HEK293T (cell line): ENCODE measurements at regions of chr7 and their contacts with region 1.

Region 1: DNA sequence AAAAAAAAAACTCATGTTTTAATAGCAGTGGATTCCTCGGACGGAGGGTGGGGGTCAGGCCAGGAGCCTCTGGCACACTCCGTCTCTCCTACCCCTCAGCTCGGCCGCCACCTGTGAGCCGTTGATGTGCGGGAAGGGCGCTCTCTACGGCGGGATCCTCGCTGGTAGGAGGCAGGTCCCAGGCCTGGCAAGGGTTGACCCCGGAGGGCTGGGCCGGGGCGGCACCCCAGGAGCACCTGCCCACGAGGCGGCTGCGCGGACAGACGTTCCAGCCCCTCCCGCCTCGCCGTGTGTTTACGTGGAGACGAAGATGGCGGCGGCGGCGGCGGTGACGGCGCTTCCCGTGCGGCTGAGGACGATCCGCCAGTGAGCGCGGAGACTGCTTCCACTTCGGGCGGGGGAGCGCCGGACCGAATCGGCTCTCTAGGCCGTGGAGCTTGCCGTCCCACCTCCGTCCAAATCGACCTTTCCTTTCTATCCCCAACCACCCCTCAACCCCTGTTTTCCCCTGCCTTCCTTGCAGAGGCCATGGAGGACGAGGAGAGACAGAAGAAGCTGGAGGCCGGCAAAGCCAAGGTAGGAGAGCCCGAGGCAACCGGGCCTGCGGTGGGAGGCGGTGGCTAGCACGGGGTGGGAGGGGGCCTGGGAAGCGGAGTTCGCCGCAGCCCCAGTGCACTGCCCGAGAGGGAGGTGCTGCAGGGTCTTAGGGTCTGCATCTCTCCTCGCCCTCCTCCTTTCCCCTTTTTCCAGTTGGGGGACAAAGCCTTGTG is at the start of gene AKAP9:
- DNase-seq: peak; percentile 74

Region 2: DNA sequence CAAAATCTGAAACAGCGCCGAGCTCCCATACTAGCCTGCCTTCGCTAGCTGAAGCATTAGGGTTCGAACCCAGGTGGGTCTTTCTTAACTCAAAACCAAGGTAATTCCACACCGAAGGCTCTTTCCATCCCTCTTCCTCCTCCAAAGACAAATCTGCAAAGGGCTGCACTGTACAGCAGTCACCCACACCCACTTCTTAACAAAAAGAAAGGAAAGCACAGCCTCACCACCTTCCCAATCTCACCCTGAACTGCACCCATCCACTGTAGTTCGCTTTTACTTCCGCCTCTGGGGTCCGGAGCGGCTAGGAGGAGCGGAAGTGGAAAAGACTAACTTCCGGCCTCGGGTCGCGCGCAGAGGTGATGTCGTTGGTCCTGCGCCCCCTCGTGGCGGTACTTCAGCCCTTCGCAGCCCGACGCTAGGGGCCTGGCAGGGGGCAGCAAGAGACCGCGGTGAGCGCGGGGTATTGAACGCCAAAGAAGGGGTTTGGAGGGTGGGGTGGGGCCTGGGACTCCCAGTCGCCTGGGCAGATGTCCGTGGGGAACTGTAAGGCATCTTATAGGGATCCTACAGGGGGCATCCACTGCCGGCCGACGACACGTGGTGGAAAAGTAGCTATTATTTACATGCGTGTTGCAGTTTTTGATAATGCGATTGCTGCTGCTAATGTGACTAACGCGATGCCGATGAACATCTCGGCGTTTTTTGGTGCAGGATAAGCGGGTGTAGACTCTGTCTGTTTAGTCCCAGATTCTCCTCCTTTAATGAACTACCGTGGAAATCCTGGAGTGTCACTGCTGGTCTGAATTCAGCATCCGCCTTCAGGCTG is 60.1 kb before region 1 on chr7 and contains the start of gene MTERF1:
- CTCF ChIA-PET with region 1: interaction called, 10 read pairs
- POLR2A ChIA-PET with region 1: interaction called, 17 read pairs
- DNase-seq: peak; percentile 88